Caco-2 (cell line): ENCODE measurements at regions of chr4 and their contacts with region 1.

Region 1: DNA sequence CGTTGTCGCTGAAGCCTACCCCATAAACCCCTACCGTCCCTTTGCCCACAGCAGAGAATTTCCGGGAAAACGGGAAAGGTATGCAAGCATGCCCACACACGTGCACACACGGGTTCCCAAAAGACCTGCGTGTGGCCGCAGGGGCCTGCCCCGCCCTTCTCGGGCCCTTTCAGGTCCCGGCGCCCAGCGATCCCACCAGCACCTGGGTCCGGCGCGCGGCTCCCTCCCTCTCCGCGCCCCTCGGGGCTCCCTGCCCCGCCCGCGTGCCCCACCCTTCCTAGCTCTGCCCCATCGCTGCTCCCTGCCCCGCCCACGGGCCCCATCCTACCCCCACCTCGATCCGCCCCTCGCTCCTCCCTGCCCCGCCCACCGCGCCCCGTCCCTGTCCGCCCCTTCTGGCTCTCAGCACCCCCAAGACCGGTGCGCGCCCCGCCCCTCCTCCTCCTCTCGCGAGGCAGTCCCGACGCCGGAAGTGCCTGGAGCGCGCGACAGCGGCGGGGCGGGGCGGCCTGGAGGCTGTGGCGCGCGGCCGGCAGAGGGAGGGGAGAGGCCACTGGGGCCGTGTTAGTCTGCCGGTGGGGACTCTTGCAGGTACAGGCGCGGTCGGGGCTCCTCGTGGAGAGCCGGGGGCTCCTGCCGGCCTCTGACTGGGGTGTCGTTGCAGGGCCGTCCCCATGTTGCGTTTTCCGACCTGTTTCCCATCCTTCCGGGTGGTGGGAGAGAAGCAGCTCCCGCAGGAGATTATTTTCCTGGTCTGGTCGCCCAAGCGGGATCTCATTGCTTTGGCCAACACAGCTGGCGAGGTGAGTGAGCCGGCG is at the start of gene ANAPC4:
- DNase-seq: peak; percentile 95 to 97
- H3K4me3 ChIP-seq: peak within 1 kb of the TSS; percentile 84
- H3K4me3 Mint-ChIP-seq: no peak within 1 kb of the TSS
- H3K27ac Mint-ChIP-seq: peak within 1 kb of the TSS; percentile 87
- H3K4me1 ChIP-seq: peaks cover 10% of the 10 kb centered on the region; the same call in 1 of the 2 replicates
- H3K4me1 Mint-ChIP-seq: peaks cover 7% of the 10 kb centered on the region
- H3K27me3 ChIP-seq: no peaks in the 10 kb centered on the region
- H3K27me3 Mint-ChIP-seq: no peaks in the 10 kb centered on the region
- CTCF ChIP-seq: no peak
- total RNA-seq, gene ANAPC4: 24.9 and 32.3 TPM in 2 replicates

Region 2: DNA sequence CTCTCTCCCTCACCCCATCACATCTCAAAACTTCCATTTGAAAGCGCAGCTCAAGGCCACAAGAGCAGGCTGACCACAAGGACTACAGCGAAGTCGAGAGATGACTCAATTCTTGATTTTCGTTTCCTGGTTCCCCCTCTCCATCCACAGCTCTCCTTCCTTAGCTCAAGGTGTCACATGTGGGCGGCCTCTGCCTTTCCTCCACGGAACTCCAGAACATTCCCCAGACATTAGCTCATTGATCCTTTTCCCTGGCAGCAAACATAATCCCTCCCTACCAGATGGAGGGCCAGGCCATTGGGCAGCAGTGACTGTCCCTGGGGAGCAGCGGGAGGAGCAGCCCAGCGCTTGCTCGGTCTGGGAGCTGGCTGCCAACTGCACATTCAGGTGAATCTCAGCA is 520.4 kb before region 1 on chr4:
- CTCF ChIA-PET with region 1: no interaction called
- POLR2A ChIA-PET with region 1: no interaction called
- intact Hi-C with region 1: no loop called
- DNase-seq: no peak
- H3K4me3 ChIP-seq: no peak overlapping the region
- H3K4me3 Mint-ChIP-seq: no peak overlapping the region
- H3K27ac Mint-ChIP-seq: no peak overlapping the region
- H3K4me1 ChIP-seq: no peaks in the 10 kb centered on the region
- H3K4me1 Mint-ChIP-seq: no peaks in the 10 kb centered on the region
- H3K27me3 ChIP-seq: no peaks in the 10 kb centered on the region
- H3K27me3 Mint-ChIP-seq: peaks cover 26% of the 10 kb centered on the region
- CTCF ChIP-seq: no peak

Region 3: DNA sequence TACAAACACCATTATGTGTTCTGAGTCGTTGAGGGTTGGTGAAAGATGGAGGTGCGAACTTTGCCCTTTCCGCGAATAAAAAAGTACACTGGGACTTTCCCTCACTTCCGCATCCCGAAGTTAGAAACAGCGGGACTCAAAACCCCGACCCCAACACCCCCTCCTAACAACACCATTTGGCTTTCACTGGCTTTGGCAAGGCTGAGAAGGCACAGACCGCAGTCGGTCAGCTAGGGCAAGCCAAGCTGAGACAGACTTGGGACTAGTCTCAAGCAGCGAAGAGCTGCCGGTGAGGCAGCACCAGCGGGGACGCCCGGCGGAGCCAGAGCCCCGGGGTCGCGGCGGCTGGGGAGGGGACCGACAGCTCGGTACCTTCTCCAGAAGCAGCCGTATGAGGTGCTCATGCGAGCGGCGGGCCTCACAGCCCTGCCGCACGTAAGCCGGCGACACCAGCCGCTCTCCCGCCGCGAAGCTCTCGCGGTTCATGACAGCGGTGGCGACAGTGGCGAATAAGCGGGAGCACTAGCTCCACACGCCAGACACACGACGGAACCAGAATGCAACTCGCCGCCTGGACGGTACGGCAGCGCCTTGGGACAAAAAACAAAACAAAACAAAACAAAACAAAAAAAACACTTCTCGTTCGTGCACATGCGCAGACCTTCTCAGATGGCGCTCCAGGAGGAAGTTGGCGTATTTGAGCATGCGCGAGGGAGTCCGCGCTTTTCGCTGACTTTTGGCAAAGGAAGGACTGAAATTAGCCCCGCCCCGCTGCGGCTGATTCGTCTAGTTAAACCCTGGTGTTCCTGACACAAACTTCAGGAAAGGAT is 216.9 kb before region 1 on chr4 and contains the start of gene SEPSECS:
- CTCF ChIA-PET with region 1: no interaction called
- POLR2A ChIA-PET with region 1: no interaction called
- intact Hi-C with region 1: loop called (anchors 5 kb)
- DNase-seq: peak; percentile 94 to 95
- H3K4me3 ChIP-seq: peak within 1 kb of the TSS; percentile 70
- H3K4me3 Mint-ChIP-seq: peak within 1 kb of the TSS; percentile 92
- H3K27ac Mint-ChIP-seq: peak within 1 kb of the TSS; percentile 92
- H3K4me1 ChIP-seq: peaks cover 14% of the 10 kb centered on the region; the same call in 1 of the 2 replicates
- H3K4me1 Mint-ChIP-seq: peaks cover 16% of the 10 kb centered on the region
- H3K27me3 ChIP-seq: no peaks in the 10 kb centered on the region
- H3K27me3 Mint-ChIP-seq: no peaks in the 10 kb centered on the region
- CTCF ChIP-seq: no peak
- total RNA-seq, gene SEPSECS: 5.7 and 6.0 TPM in 2 replicates

Region 4: DNA sequence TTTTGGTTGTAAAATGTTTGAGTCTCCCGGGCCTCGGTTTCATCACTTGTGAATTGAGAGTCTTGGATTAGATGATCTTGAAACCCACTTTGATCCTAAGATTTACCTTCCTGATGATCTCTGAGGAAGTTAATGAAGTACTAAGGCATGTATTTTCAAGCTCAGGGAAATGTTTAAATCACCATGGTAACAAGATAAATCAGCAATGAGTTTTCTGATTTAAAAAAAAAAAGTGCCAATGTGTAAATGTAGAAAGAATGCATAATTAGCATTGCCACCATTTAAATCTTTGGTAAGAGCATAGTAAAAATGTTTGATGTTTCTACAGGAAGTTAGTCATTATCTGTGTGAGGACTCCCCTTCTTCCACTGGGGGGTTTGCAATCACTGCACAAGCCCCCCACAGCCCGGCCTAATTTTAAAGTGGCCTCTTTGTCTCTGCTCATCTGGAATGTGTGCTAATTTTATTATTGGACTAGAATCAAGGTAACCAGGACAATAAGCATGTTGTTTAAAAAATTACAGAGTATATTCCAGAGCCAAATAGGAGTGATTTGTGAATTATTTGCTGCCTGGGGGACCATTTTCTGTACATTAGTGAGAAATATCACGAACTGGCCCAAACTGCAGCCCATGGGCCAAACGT is 372.3 kb after region 1 on chr4:
- CTCF ChIA-PET with region 1: no interaction called
- POLR2A ChIA-PET with region 1: no interaction called
- intact Hi-C with region 1: no loop called
- DNase-seq: no peak
- H3K4me3 ChIP-seq: no peak overlapping the region
- H3K4me3 Mint-ChIP-seq: no peak overlapping the region
- H3K27ac Mint-ChIP-seq: no peak overlapping the region
- H3K4me1 ChIP-seq: no peaks in the 10 kb centered on the region
- H3K4me1 Mint-ChIP-seq: no peaks in the 10 kb centered on the region
- H3K27me3 ChIP-seq: no peaks in the 10 kb centered on the region
- H3K27me3 Mint-ChIP-seq: no peaks in the 10 kb centered on the region
- CTCF ChIP-seq: no peak